ENCODE measurements at regions of chr6 and their contacts with region 1.

Region 1: GRCh38 chr6:157099912-157100593 is 223.3 kb downstream of the TMEM242 start:
- DNase-seq: peak; percentile 44 to 74
- ATAC-seq: peak; percentile 97 to 99 (median 98)
- H3K4me3 ChIP-seq: no peak overlapping the region
- H3K4me3 Mint-ChIP-seq: peak overlapping the region; percentile 81
- H3K27ac ChIP-seq: peak overlapping the region; percentile 85
- H3K27ac Mint-ChIP-seq: peak overlapping the region; percentile 92 to 93
- H3K4me1 ChIP-seq: peaks cover 20% of the 10 kb centered on the region
- H3K4me1 Mint-ChIP-seq: peaks cover 57 to 58% of the 10 kb centered on the region in 2 donors
- H3K27me3 ChIP-seq: no peaks in the 10 kb centered on the region
- H3K27me3 Mint-ChIP-seq: no peaks in the 10 kb centered on the region
- CTCF ChIP-seq: no peak

Region 2: GRCh38 chr6:157054531-157054979 is 45.5 kb before region 1 on chr6:
- intact Hi-C with region 1: loop called (anchors 1 kb)
- DNase-seq: peak; percentile 32 to 79
- ATAC-seq: peak; percentile 81 to 93 (median 92)
- H3K4me3 ChIP-seq: no peak overlapping the region
- H3K4me3 Mint-ChIP-seq: peak overlapping the region; percentile 79
- H3K27ac ChIP-seq: peak overlapping the region; percentile 86
- H3K27ac Mint-ChIP-seq: peak overlapping the region; percentile 92 to 96
- H3K4me1 ChIP-seq: peaks cover 40% of the 10 kb centered on the region
- H3K4me1 Mint-ChIP-seq: peaks cover 44 to 49% of the 10 kb centered on the region in 2 donors
- H3K27me3 ChIP-seq: no peaks in the 10 kb centered on the region
- H3K27me3 Mint-ChIP-seq: no peaks in the 10 kb centered on the region
- CTCF ChIP-seq: no peak

Region 3: DNA sequence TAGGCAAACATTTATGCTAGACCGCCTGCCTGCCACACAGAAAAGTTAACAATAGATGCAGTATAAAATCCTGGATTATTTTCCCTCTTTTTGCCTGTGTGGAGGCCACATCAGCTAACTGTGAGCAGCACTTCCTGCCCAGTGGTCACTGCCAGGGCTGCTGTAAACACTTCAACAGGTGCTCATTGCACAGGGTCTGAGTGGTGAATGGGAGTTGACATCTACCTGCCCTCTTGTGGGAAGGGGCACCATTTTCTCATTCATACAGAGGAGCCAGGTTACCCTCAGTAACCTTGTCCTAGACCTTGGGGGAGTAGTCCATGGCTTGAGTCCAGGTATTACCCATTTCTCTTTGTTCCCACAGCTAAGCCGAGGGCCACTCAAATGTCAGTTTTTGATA is 12.1 kb before region 1 on chr6:
- intact Hi-C with region 1: loop called (anchors 2 kb)
- DNase-seq: no peak
- ATAC-seq: no peak
- H3K4me3 ChIP-seq: no peak overlapping the region
- H3K4me3 Mint-ChIP-seq: no peak overlapping the region
- H3K27ac ChIP-seq: no peak overlapping the region
- H3K27ac Mint-ChIP-seq: peak overlapping the region in 1 of 2 donors; percentile 65
- H3K4me1 ChIP-seq: peaks cover 8% of the 10 kb centered on the region
- H3K4me1 Mint-ChIP-seq: peaks cover 42 to 45% of the 10 kb centered on the region in 2 donors
- H3K27me3 ChIP-seq: no peaks in the 10 kb centered on the region
- H3K27me3 Mint-ChIP-seq: no peaks in the 10 kb centered on the region
- CTCF ChIP-seq: no peak

Measured in natural killer cell (primary cell).